ENCODE measurements at regions of chr4 and their contacts with region 1.

Region 1: DNA sequence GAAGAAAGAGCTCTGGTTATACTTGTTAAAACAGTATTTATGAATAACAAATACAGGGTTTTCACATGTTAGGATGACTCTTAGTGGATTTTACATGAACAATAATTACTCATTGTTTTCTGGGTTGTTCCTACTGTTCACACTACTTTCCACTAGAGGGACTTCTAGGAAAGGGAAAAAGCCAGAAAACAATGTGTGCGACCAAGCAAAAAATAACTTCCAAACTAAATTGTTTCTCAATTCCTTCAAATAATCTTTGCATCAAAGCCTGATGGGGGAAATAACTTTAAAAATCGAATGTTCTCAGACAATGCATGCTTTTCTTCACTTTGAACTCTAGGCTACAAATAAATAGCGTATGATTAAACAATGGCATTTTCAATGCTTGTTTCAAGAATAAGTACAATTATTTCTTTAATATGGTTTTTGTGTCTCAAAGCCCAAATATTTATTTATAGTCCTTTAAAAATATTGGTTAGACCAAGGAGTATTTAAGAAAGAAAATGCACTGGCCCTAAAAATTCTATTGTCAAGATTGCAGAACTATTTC is 72.1 kb upstream of the ETNPPL start:
- DNase-seq: no peak
- H3K4me3 Mint-ChIP-seq: no peak overlapping the region
- H3K27ac Mint-ChIP-seq: no peak overlapping the region
- H3K4me1 Mint-ChIP-seq: peaks cover 14% of the 10 kb centered on the region
- H3K27me3 Mint-ChIP-seq: peaks cover 17% of the 10 kb centered on the region

Region 2: GRCh38 chr4:109294006-109294405 is 459.1 kb after region 1 on chr4:
- intact Hi-C with region 1: loop called (anchors 2 kb)
- DNase-seq: no peak
- H3K4me3 Mint-ChIP-seq: no peak overlapping the region
- H3K27ac Mint-ChIP-seq: no peak overlapping the region
- H3K4me1 Mint-ChIP-seq: peaks cover 1% of the 10 kb centered on the region
- H3K27me3 Mint-ChIP-seq: peaks cover 32% of the 10 kb centered on the region